Mammary epithelial cell (primary cell): ENCODE measurements at regions of chr1 and their contacts with region 1.

Region 1: GRCh38 chr1:243312952-243313634 is 57.3 kb downstream of the SDCCAG8 start:
- DNase-seq: peak; percentile 20
- H3K4me3 ChIP-seq: no peak overlapping the region
- H3K27ac ChIP-seq: peak overlapping the region; percentile 6
- H3K4me1 ChIP-seq: peaks cover 8% of the 10 kb centered on the region
- H3K27me3 ChIP-seq: no peaks in the 10 kb centered on the region
- CTCF ChIP-seq: no peak

Region 2: GRCh38 chr1:242477944-242478343 is 835.1 kb before region 1 on chr1:
- CTCF ChIA-PET with region 1: no interaction called
- dilution Hi-C with region 1: no loop called
- in situ Hi-C with region 1: loop called in 1 of 2 experiments (anchors 25 kb)
- intact Hi-C with region 1: no loop called
- DNase-seq: no peak
- H3K4me3 ChIP-seq: no peak overlapping the region
- H3K27ac ChIP-seq: no peak overlapping the region
- H3K4me1 ChIP-seq: no peaks in the 10 kb centered on the region
- H3K27me3 ChIP-seq: no peaks in the 10 kb centered on the region
- CTCF ChIP-seq: no peak